K562 (cell line): ENCODE measurements at regions of chr19 and their contacts with region 1.

Region 1: DNA sequence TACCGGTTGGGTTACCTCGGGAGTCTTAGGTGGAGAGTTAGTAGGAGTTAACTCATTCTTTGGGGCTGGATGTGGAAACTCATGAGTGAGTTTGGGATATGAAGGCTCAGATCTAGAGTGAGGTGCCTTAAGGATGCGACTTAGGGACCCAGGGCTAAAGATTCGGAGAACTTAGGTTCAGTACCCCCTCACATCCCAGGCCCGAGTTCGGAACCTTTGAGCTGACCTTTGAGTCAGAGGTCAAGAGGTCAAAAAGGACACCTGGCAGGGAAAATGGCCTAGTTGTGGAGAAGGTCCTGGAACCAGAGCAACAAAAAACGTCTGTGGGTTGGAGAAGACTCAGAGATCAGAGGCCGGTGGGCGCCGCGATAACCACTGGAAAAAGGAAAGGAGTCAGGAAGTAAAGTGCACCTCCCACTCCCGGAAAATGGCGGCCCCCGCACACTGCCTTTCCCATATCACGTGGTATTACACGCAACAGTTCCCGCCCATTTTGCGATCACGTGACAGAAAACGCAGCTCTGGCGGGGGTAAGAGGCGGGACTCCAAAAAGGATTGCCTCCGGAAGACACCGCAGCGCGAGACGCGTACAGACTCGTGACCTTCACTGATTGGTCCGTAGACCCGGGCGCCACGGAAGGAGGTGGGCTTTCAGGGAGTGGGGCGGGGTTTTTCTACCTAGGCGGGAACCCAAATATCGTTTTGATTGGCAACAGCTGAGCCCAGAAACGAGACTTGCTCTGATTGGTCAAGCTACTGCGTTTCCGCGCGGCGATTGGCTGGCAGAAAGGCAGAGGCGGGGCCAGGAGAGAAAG is at the start of gene ACTMAP:
- DNase-seq: peak; percentile 98 to 100 (median 98)
- ATAC-seq: peak; percentile 92
- H3K4me3 ChIP-seq: peak within 1 kb of the TSS; percentile 59
- H3K27ac ChIP-seq: peak within 1 kb of the TSS; percentile 99
- H3K4me1 ChIP-seq: peaks cover 31 to 40% of the 10 kb centered on the region in 2 experiments
- H3K27me3 ChIP-seq: no peaks in the 10 kb centered on the region
- CTCF ChIP-seq: no peak
- EP300 ChIP-seq: no peak
- POLR2A ChIP-seq: peak; percentile 73
- RAD21 ChIP-seq: 0 out of 4 replicates have a peak, but pooled peaks of 1 of the 2 experiments have one; percentile 7
- polyA plus RNA-seq, gene ACTMAP: 4.8 to 5.1 TPM

Region 2: GRCh38 chr19:40348125-40348913 is 401.9 kb before region 1 on chr19 and contains the starts of genes C19orf47 and PLD3:
- CTCF ChIA-PET with region 1: no interaction called
- POLR2A ChIA-PET with region 1: no interaction called
- in situ Hi-C with region 1: no loop called
- intact Hi-C with region 1: no loop called
- DNase-seq: peak; percentile 100
- ATAC-seq: peak; percentile 99
- H3K4me3 ChIP-seq: peak within 1 kb of the TSS; percentile 70
- H3K27ac ChIP-seq: peak within 1 kb of the TSS; percentile 79
- H3K4me1 ChIP-seq: peaks cover 7 to 9% of the 10 kb centered on the region in 2 experiments; a peak in 3 of 5 replicates
- H3K27me3 ChIP-seq: no peaks in the 10 kb centered on the region
- CTCF ChIP-seq: no peak
- EP300 ChIP-seq: peak; percentile 56
- POLR2A ChIP-seq: peak; percentile 84
- RAD21 ChIP-seq: no peak
- polyA plus RNA-seq, gene C19orf47: 0.08 to 0.66 TPM
- polyA plus RNA-seq, gene PLD3: 2.3 to 5.8 TPM

Region 3: DNA sequence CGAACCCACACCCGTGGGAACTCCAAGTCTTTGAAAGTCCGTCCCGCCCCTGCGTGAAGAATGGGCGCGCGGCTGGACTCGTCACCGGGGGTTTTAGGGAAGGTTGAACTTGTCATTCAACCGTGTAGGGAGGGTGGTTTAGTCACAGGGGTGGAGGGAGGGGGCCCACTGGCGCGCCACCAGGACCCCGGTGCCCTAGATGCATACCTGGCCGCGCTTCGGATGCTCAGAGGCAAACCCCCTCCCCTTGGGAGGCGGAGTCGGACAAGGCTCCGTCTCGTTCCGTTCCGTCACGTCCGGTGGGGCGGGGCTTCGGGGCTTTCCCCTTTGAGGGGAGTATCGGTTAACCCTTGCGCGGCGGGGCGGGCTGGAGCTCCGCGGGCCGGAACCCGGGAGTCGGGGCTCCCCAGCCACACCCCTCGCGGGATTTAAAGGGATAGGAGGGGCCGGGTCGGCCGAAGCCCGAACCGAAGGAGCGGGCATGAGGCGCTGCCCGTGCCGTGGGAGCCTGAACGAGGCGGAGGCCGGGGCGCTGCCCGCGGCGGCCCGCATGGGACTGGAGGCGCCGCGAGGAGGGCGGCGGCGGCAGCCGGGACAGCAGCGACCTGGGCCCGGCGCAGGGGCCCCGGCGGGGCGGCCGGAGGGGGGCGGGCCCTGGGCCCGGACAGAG is 33.5 kb before region 1 on chr19 and contains the starts of genes COQ8B and ITPKC:
- CTCF ChIA-PET with region 1: no interaction called
- POLR2A ChIA-PET with region 1: interaction called, 8 read pairs
- in situ Hi-C with region 1: no loop called
- intact Hi-C with region 1: loop called (anchors 2 kb)
- DNase-seq: peak; percentile 93 to 99 (median 94)
- ATAC-seq: peak; percentile 78
- H3K4me3 ChIP-seq: peak within 1 kb of the TSS; percentile 62
- H3K27ac ChIP-seq: peak within 1 kb of the TSS; percentile 80
- H3K4me1 ChIP-seq: peaks cover 21 to 55% of the 10 kb centered on the region in 2 experiments
- H3K27me3 ChIP-seq: no peaks in the 10 kb centered on the region
- CTCF ChIP-seq: peak in 1 of 3 experiments; percentile 24; a peak in 1 of 6 replicates
- EP300 ChIP-seq: no peak
- POLR2A ChIP-seq: peak; percentile 77
- RAD21 ChIP-seq: no peak; a peak in 1 of 4 replicates
- polyA plus RNA-seq, gene COQ8B: 0.41 to 0.51 TPM
- polyA plus RNA-seq, gene ITPKC: 0.08 to 0.22 TPM

Region 4: GRCh38 chr19:40737102-40737644 is 13.1 kb before region 1 on chr19:
- CTCF ChIA-PET with region 1: no interaction called
- POLR2A ChIA-PET with region 1: interaction called, 11 read pairs
- in situ Hi-C with region 1: no loop called
- intact Hi-C with region 1: no loop called
- DNase-seq: no peak
- ATAC-seq: no peak
- H3K4me3 ChIP-seq: no peak overlapping the region
- H3K27ac ChIP-seq: no peak overlapping the region
- H3K4me1 ChIP-seq: peaks cover 0 to 22% of the 10 kb centered on the region in 2 experiments; a peak in 3 of 5 replicates
- H3K27me3 ChIP-seq: no peaks in the 10 kb centered on the region
- CTCF ChIP-seq: no peak
- EP300 ChIP-seq: no peak
- POLR2A ChIP-seq: no peak
- RAD21 ChIP-seq: no peak

Region 5: DNA sequence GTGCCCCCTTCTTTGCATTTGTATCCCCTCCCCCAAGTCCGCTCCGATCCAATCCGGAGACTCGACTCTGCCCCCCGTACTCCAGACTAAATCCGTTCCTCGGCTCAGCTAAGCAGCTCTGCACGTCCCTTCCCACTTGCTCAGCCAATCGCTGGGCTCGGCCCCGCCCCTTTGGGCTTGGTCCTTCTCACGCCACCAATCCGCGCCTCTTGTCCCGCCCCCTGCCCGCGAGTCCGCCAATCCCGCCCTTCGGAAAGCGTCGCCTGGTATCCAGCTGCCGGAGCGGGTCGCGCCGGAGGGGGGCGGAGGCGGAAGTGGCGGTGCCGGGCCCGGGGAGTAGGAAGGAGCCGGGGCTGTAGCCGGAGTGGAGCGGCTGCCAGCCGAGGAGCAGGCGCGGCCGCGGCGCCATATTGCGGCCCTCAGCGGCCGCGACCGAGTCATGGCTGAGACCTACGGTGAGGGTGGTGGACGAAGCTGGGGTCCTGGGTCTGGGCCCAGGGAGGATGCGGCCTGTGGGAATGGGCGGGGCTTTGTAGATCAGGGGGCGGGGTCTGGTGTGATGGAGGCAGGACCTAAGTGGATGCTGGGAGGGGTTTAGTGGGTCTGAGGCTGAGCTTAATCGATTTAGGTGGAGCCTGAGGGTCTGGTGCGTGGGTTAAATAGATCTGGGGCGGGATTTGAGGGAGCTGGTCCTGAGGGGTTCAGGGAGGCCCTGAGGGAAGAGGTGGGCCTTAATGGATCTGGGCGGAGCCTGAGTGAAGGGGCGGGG is 27.9 kb after region 1 on chr19 and contains the start of gene RAB4B:
- CTCF ChIA-PET with region 1: no interaction called
- POLR2A ChIA-PET with region 1: interaction called, 25 read pairs
- in situ Hi-C with region 1: no loop called
- intact Hi-C with region 1: no loop called
- DNase-seq: peak; percentile 96 to 100 (median 97)
- ATAC-seq: peak; percentile 92
- H3K4me3 ChIP-seq: peak within 1 kb of the TSS; percentile 84
- H3K27ac ChIP-seq: peak within 1 kb of the TSS; percentile 90
- H3K4me1 ChIP-seq: peaks cover 12 to 18% of the 10 kb centered on the region in 2 experiments; a peak in 3 of 5 replicates
- H3K27me3 ChIP-seq: no peaks in the 10 kb centered on the region
- CTCF ChIP-seq: no peak
- EP300 ChIP-seq: no peak
- POLR2A ChIP-seq: peak; percentile 74
- RAD21 ChIP-seq: no peak
- polyA plus RNA-seq, gene RAB4B: 0.28 to 0.92 TPM

Region 6: DNA sequence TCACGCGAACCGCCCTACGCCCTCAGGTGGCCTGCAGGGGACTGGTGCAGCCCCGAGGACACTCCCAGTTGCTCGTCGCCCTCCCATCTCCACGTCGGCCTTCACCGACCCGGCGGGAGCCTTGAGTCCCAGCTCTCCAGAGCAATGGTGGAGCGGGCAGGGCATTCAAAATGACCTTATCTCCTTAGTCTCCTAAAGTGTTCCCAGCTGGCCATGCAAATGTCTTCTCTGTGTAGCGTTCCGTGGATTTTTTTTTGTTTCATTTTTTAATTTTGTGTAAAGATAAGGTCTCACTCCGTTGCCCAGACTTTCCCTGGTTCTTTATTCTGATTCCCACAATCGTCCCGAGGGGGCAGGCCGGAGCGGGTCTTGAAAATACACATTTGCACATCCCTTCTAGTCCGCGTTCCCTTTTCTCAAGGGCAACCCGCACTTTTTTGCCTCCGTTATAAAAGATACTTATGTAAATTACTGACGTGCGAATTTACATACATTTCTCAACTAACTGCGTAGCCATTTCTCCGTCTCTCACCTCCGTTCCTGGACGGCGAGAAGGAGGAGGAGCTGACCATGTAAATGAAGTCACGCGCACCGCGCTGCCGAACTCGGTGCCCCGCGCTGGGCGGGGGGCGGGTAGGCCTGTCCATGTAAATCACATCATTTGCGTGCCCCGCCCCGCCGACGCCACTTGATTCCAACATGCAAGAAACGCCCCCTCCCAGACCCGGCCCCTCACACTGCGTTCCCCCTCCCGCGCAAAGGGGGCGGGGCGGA is 48.1 kb after region 1 on chr19:
- CTCF ChIA-PET with region 1: no interaction called
- POLR2A ChIA-PET with region 1: interaction called, 11 read pairs
- in situ Hi-C with region 1: no loop called
- intact Hi-C with region 1: loop called (anchors 2 kb)
- DNase-seq: peak; percentile 74 to 100 (median 86)
- ATAC-seq: peak; percentile 88
- H3K4me3 ChIP-seq: peak overlapping the region; percentile 38
- H3K27ac ChIP-seq: peak overlapping the region; percentile 78
- H3K4me1 ChIP-seq: peaks cover 43 to 52% of the 10 kb centered on the region in 2 experiments
- H3K27me3 ChIP-seq: no peaks in the 10 kb centered on the region
- CTCF ChIP-seq: peak; percentile 33 to 57 (median 55); a peak in 5 of 6 replicates
- EP300 ChIP-seq: peak; percentile 9; the same call in 1 of the 2 replicates
- POLR2A ChIP-seq: peak; percentile 76
- RAD21 ChIP-seq: peak; percentile 3 to 17; a peak in 1 of 4 replicates

Region 7: DNA sequence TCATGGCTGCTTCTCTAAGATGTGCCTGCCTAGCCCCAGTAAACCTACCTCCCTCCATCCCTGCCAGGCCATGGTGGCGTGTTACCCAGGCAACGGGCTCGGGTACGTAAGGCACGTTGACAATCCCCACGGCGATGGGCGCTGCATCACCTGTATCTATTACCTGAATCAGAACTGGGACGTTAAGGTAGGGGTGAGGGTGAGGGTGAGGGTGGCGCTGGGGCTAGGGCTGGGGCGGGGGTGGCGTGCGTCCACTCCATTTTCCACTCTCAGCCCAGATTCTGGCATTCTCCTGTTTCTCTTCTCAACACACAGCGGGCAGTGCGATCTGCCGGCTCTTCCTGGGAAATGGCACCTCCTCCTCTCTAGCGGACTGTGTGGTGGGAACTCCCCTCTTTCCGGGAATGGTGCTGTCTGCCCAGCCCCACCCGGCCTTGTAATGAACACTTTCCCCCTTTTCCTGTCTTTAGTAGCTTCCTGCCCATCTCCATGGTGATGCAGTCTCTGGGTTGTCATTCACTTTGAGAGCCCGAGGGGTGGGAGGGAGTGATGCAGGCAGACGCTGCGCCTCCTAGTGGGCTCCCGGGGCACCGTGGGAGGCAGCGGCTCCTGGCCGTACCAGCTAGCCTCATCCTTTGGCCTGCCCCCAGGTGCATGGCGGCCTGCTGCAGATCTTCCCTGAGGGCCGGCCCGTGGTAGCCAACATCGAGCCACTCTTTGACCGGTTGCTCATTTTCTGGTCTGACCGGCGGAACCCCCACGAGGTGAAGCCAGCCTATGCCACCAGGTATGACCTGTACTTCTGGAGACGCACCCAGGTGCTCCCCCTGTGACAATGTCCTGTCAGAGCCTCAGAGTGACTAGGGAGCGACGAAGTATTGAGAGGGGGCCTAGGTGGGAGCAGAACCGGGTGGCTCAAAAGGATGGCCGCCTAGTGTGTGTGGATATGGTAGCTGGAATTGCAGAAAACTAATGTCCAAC is 56.5 kb after region 1 on chr19:
- CTCF ChIA-PET with region 1: no interaction called
- POLR2A ChIA-PET with region 1: interaction called, 12 read pairs
- in situ Hi-C with region 1: no loop called
- intact Hi-C with region 1: no loop called
- DNase-seq: peak; percentile 75 to 87 (median 80)
- ATAC-seq: peak; percentile 68
- H3K4me3 ChIP-seq: no peak overlapping the region
- H3K27ac ChIP-seq: no peak overlapping the region
- H3K4me1 ChIP-seq: peaks cover 39 to 82% of the 10 kb centered on the region in 2 experiments
- H3K27me3 ChIP-seq: no peaks in the 10 kb centered on the region
- CTCF ChIP-seq: peak; percentile 82 to 91 (median 85)
- EP300 ChIP-seq: no peak
- POLR2A ChIP-seq: no peak; the same call in 1 of the 2 replicates
- RAD21 ChIP-seq: peak; percentile 41 to 59

Region 8: GRCh38 chr19:40954573-40954972 is 204.3 kb after region 1 on chr19:
- CTCF ChIA-PET with region 1: no interaction called
- POLR2A ChIA-PET with region 1: no interaction called
- in situ Hi-C with region 1: no loop called
- intact Hi-C with region 1: no loop called
- DNase-seq: peak in 1 of 4 experiments; percentile 18
- ATAC-seq: no peak
- H3K4me3 ChIP-seq: no peak overlapping the region
- H3K27ac ChIP-seq: no peak overlapping the region
- H3K4me1 ChIP-seq: no peaks in the 10 kb centered on the region
- H3K27me3 ChIP-seq: peaks cover 0 to 6% of the 10 kb centered on the region in 2 experiments; a peak in 2 of 5 replicates
- CTCF ChIP-seq: no peak
- EP300 ChIP-seq: no peak
- POLR2A ChIP-seq: no peak
- RAD21 ChIP-seq: no peak